H1 (cell line): ENCODE measurements at regions of chr15 and their contacts with region 1.

Region 1: DNA sequence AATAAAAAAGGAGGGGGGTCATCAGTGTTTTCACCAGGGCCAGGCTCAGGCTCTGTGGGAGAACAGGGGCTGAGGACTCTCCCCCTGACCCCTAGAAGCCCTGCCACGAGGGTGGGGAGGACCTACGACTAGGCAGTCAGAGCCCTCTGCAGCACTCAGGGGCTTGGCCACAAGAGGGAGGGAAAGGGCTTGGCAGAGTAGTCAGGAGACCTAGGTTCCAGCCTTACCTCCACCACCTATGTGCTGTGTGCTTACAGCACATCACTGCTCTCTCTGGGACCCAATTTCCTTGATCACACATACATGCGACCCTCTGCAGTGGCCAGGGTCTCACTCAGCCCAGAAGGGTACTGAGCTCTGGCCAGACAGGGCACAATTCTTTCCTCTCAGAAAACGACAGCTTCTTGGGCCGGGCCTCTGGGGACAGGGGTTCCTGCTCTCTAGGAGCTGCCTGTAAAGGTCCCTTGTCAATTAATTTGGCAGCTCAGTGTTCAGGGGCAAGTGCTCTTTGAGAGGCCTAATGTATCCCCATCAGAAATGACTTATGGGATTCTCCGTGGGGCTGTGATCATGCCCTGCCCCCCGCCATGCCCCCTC is 16.4 kb upstream of the SKIC8 start:
- DNase-seq: peak in 1 of 2 experiments; percentile 70
- H3K4me3 ChIP-seq: no peak overlapping the region
- H3K27ac ChIP-seq: peak overlapping the region; percentile 5; the same call in 1 of the 2 replicates
- H3K4me1 ChIP-seq: peaks cover 0 to 23% (median 12%) of the 10 kb centered on the region in 4 experiments; a peak in 6 of 7 replicates
- H3K27me3 ChIP-seq: no peaks in the 10 kb centered on the region
- CTCF ChIP-seq: peak; percentile 89 to 95 (median 92)
- EP300 ChIP-seq: no peak
- POLR2A ChIP-seq: no peak
- RAD21 ChIP-seq: peak; percentile 92 to 93

Region 2: GRCh38 chr15:78225783-78226541 is 89.8 kb before region 1 on chr15:
- CTCF ChIA-PET with region 1: no interaction called
- POLR2A ChIA-PET with region 1: no interaction called
- DNase-seq: no peak
- H3K4me3 ChIP-seq: no peak overlapping the region
- H3K27ac ChIP-seq: no peak overlapping the region
- H3K4me1 ChIP-seq: no peaks in the 10 kb centered on the region
- H3K27me3 ChIP-seq: no peaks in the 10 kb centered on the region
- CTCF ChIP-seq: no peak
- EP300 ChIP-seq: no peak
- POLR2A ChIP-seq: no peak
- RAD21 ChIP-seq: no peak

Region 3: DNA sequence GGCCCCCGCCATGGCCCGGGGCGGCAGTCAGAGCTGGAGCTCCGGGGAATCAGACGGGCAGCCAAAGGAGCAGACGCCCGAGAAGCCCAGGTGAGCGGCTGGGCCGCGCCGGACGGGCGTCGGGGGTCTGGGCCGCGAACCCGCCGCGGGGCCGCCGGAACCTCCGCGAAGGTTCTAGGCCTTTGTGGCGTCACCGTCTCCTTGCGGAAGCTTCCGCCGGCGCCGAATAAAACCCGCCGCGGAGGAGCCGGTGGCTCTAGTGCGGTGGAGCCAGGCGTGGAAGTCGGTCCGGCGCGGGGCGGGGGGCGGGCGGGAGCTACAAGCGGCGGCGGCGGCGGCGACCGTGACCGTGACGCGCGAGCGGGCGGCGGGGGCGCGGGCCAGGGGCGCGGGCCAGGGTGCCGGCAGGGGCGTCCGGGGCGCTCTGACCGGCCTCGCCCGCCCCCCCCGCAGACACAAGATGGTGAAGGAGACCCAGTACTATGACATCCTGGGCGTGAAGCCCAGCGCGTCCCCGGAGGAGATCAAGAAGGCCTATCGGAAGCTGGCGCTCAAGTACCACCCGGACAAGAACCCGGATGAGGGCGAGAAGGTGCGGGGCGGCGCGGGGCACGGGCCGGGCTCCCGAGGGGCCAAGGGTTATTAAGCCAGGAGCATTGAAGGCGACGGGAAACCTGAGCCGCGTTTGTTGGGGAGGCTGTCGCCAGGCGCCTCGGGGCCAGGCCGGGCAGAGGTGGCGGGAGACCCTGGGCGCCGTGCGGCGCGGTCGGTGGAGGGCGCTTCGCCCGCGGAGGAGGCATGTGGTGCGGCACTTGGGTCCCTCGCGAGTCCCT is 51.3 kb before region 1 on chr15 and contains the start of gene DNAJA4:
- CTCF ChIA-PET with region 1: no interaction called
- POLR2A ChIA-PET with region 1: no interaction called
- DNase-seq: peak in 1 of 2 experiments; percentile 68
- H3K4me3 ChIP-seq: peak within 1 kb of the TSS; percentile 29 to 59 (median 32)
- H3K27ac ChIP-seq: no peak within 1 kb of the TSS
- H3K4me1 ChIP-seq: 0 out of 7 replicates have a peak, but pooled peaks cover 0 to 3% (median 0%) of the 10 kb centered on the region in 4 experiments
- H3K27me3 ChIP-seq: peaks cover 0 to 19% (median 10%) of the 10 kb centered on the region in 4 experiments; a peak in 4 of 7 replicates
- CTCF ChIP-seq: peak in 1 of 3 experiments; percentile 2; a peak in 1 of 4 replicates
- EP300 ChIP-seq: no peak
- POLR2A ChIP-seq: no peak
- RAD21 ChIP-seq: no peak
- total RNA-seq, gene DNAJA4: 2.5 and 3.6 TPM in 2 replicates

Region 4: DNA sequence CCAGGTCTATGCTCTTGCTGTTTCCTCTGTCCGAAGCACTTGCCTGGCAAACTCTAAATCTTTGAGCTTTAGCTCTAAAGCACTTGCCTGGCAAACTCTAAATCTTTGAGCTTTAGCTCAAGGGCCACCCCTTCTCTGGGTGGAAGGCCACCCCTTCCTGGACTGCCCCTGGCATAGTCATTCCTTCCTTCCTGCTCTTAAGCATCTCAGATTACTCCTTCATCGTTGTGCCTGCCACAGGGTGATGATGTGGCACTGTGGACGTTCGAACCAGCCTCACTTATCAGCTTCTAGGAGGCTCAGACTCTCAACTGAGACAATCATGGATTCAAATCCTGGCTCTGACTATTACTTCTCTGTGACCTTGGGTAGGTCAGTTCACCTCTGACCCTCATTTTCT is 13.8 kb after region 1 on chr15:
- CTCF ChIA-PET with region 1: interaction called, 21 read pairs
- POLR2A ChIA-PET with region 1: interaction called, 5 read pairs
- DNase-seq: no peak
- H3K4me3 ChIP-seq: no peak overlapping the region
- H3K27ac ChIP-seq: no peak overlapping the region
- H3K4me1 ChIP-seq: peaks cover 5 to 11% (median 8%) of the 10 kb centered on the region in 4 experiments
- H3K27me3 ChIP-seq: no peaks in the 10 kb centered on the region
- CTCF ChIP-seq: no peak
- EP300 ChIP-seq: no peak
- POLR2A ChIP-seq: no peak
- RAD21 ChIP-seq: no peak

Region 5: DNA sequence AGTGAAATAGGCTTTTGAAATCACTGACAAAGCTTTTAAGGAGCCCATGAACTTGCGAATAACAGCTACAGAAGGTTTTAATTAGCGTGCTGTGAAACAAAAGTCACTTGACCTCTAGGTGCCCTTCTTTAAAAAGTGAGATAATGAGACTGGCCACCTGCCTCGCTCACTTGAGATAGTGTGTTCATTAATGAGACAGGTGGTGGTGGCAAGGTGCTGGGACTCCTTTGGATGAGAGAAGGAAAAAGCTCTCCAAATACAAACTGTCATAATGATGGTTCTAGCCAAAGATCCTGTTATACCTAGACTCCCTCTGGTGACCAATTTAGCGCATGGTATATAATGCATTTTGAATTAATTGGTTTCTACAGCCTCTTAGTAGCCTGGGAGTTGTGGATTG is 99.5 kb after region 1 on chr15:
- CTCF ChIA-PET with region 1: interaction called, 173 read pairs
- POLR2A ChIA-PET with region 1: interaction called, 4 read pairs
- DNase-seq: no peak
- H3K4me3 ChIP-seq: no peak overlapping the region
- H3K27ac ChIP-seq: no peak overlapping the region
- H3K4me1 ChIP-seq: peaks cover 0 to 4% (median under 1%) of the 10 kb centered on the region in 4 experiments; a peak in 3 of 7 replicates
- H3K27me3 ChIP-seq: no peaks in the 10 kb centered on the region
- CTCF ChIP-seq: peak in 2 of 3 experiments; percentile 31 to 44; a peak in 2 of 4 replicates
- EP300 ChIP-seq: no peak
- POLR2A ChIP-seq: no peak
- RAD21 ChIP-seq: peak; percentile 60 to 66

Region 6: GRCh38 chr15:78481917-78482316 is 166.1 kb after region 1 on chr15:
- CTCF ChIA-PET with region 1: interaction called, 19 read pairs
- POLR2A ChIA-PET with region 1: interaction called, 4 read pairs
- DNase-seq: no peak
- H3K4me3 ChIP-seq: no peak overlapping the region
- H3K27ac ChIP-seq: no peak overlapping the region
- H3K4me1 ChIP-seq: no peaks in the 10 kb centered on the region
- H3K27me3 ChIP-seq: no peaks in the 10 kb centered on the region
- CTCF ChIP-seq: no peak
- EP300 ChIP-seq: no peak
- POLR2A ChIP-seq: no peak
- RAD21 ChIP-seq: no peak

Region 7: DNA sequence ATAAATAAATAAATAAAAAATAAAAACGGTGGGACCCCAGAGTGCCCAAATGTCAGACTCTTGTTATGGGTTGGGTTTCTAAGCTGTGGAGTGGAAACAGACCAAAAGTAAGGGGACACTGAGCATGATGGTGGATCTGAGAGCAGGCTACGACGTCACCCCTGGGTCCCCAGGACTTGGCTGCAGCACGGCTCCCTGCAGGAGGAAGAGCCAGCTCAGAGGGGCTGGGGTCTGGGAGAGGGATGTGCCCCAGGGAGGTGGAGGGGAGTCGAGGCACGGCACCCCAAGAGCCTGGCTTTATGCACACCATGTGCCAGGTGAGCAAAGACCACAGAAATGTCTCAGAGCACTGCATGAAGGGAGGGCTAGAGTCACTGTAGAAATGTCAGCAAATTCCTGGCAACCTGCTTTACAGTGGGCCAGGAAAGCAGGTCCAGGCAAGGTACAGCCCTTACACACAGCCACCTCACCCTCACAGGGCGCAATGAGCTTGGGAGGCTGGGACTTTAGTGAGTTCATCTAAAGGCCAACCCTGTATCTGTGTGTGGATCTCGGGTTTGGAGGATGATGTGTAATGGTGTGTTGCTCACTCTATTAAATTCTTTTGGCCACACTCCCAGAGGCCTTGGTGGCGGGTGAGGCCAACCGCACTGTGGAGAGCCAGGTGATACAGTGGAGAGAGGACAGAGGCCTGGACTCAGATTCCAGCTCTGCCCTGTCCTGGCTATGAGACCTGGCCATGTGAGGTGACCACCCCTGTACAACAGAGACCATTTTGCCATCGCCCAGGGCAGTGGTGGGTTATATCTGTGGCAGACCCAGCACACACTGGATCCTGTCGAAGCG is 615.0 kb after region 1 on chr15:
- CTCF ChIA-PET with region 1: no interaction called
- POLR2A ChIA-PET with region 1: no interaction called
- DNase-seq: no peak
- H3K4me3 ChIP-seq: no peak overlapping the region
- H3K27ac ChIP-seq: no peak overlapping the region; the same call in 1 of the 2 replicates
- H3K4me1 ChIP-seq: no peaks in the 10 kb centered on the region
- H3K27me3 ChIP-seq: no peaks in the 10 kb centered on the region; a peak in 1 of 7 replicates
- CTCF ChIP-seq: no peak
- EP300 ChIP-seq: no peak
- POLR2A ChIP-seq: no peak
- RAD21 ChIP-seq: no peak